Activated B cell treated with CpG ODN at 0.5 μM for 24 hours (primary cell): ENCODE measurements at regions of chr20 and their contacts with region 1.

Region 1: GRCh38 chr20:15654208-15654645 is 919.0 kb downstream of the KIF16B start:
- DNase-seq: no peak
- ATAC-seq: peak; percentile 100
- H3K4me3 Mint-ChIP-seq: no peak overlapping the region
- H3K27ac Mint-ChIP-seq: no peak overlapping the region
- H3K4me1 Mint-ChIP-seq: peaks cover 6% of the 10 kb centered on the region
- H3K27me3 Mint-ChIP-seq: no peaks in the 10 kb centered on the region
- CTCF ChIP-seq: no peak

Region 2: DNA sequence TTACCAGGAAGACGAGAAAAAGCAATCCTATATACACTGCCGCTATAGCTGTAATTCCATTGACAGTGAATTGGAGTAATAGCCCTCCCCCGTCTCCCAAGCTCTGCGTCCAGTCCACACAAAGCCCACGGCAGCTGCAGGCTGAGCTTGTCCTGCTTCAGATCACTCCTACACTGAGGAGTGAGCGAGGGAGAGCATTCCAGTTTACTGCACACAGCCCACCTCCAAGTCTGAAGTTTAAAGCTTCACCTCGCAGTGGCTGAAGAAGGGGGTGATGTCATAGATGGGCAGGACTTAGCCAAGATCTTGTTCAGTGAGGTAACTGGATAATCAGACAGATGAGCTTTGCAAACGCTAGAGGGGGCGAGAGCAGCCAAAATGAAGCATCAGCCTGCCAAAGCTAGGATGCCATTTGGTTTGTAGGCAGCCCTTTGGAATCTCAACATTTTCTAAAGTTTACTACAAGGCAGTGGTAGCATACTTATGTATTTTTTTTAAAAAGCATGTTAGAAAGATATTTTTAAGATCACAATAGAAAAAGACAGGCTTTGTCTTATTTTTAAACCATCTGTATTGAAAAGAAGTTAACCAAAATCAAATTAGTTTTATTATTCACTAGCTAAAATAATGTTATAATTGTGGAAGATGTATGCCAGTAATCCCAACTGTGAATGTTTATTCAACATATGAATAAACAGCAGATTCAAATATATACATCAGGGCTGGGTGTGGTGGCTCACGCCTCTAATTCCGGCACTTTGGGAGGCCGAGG is 1316.6 kb before region 1 on chr20 and contains the start of gene FLRT3:
- CTCF ChIA-PET with region 1: interaction called, 15 read pairs
- POLR2A ChIA-PET with region 1: interaction called, 4 read pairs
- intact Hi-C with region 1: loop called (anchors 1 kb)
- DNase-seq: peak; percentile 17
- ATAC-seq: peak; percentile 79
- H3K4me3 Mint-ChIP-seq: peak within 1 kb of the TSS; percentile 50
- H3K27ac Mint-ChIP-seq: no peak within 1 kb of the TSS
- H3K4me1 Mint-ChIP-seq: peaks cover 5% of the 10 kb centered on the region
- H3K27me3 Mint-ChIP-seq: peaks cover 12% of the 10 kb centered on the region
- CTCF ChIP-seq: no peak
- total RNA-seq, gene FLRT3: not detected in 2 replicates

Region 3: DNA sequence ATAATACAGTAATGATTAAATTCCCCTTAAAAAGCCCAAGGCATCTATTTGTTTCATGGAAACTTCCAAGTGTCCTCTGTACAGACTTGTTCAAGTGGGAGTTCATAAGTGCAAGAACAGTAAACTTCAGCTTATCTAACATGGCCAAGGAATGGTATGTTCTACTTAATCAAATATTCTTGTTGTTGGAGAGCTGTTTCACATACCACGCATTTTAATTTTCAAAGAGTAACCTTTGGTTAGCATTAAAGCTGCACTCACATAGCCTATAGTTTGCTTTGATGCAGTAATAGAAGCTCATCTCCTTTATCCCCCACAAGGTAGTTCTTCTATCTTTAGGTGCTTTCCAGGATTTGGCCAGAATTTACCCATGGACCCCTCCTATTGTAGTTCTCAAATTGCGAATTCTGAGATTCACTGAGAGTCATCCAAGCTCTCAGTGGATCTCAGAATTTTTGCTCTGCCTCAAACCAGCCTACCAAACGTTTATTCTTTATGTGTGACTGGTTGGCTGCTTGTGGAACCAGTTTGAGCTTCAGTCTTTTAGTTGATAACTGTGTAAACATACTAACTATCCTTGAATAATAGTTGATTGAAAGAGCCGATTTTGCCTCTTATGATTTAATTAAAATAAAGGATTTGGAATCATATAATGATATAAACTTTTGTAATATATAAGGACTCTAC is 648.8 kb before region 1 on chr20:
- CTCF ChIA-PET with region 1: no interaction called
- POLR2A ChIA-PET with region 1: no interaction called
- intact Hi-C with region 1: no loop called
- DNase-seq: no peak
- ATAC-seq: no peak
- H3K4me3 Mint-ChIP-seq: no peak overlapping the region
- H3K27ac Mint-ChIP-seq: no peak overlapping the region
- H3K4me1 Mint-ChIP-seq: no peaks in the 10 kb centered on the region
- H3K27me3 Mint-ChIP-seq: peaks cover 5% of the 10 kb centered on the region
- CTCF ChIP-seq: no peak

Region 4: DNA sequence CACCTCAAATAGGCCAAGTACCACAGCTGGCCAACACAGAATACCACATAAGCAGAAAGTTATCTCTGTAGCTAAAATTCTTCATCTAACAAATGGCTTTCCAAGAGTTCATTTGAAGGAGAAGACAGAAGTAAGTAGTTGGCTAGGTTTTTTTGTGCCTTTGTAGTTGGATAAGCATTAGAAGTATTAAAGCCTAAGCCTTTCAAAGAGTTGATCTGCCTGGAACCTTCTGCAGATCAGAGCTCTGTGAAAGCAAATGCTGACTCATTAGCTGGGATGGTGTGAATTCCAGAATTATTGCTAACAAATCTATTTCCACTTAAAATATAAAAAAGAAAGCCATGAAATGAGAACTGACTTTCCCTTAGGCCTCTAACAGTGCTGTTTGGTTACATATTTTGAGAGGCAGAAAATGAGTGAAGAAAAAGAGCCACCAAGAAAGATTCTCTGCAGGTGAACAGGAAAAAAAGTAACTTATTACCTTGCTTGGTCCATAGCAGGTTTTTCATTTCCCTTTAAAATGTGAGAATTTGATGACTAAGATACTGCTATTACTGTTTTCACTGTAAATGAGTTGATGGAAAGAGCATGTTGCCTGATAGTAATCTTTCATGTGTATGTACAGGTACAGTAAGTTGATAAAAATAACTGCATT is 553.6 kb before region 1 on chr20:
- CTCF ChIA-PET with region 1: no interaction called
- POLR2A ChIA-PET with region 1: no interaction called
- intact Hi-C with region 1: no loop called
- DNase-seq: no peak
- ATAC-seq: no peak
- H3K4me3 Mint-ChIP-seq: no peak overlapping the region
- H3K27ac Mint-ChIP-seq: no peak overlapping the region
- H3K4me1 Mint-ChIP-seq: no peaks in the 10 kb centered on the region
- H3K27me3 Mint-ChIP-seq: no peaks in the 10 kb centered on the region
- CTCF ChIP-seq: no peak

Region 5: GRCh38 chr20:15265581-15266309 is 388.5 kb before region 1 on chr20:
- CTCF ChIA-PET with region 1: interaction called, 3 read pairs
- POLR2A ChIA-PET with region 1: no interaction called
- intact Hi-C with region 1: loop called (anchors 1 kb)
- DNase-seq: no peak
- ATAC-seq: no peak
- H3K4me3 Mint-ChIP-seq: no peak overlapping the region
- H3K27ac Mint-ChIP-seq: no peak overlapping the region
- H3K4me1 Mint-ChIP-seq: peaks cover 29% of the 10 kb centered on the region
- H3K27me3 Mint-ChIP-seq: no peaks in the 10 kb centered on the region
- CTCF ChIP-seq: no peak

Region 6: GRCh38 chr20:15643714-15644113 is 10.5 kb before region 1 on chr20:
- CTCF ChIA-PET with region 1: interaction called, 12 read pairs
- POLR2A ChIA-PET with region 1: no interaction called
- intact Hi-C with region 1: no loop called
- DNase-seq: no peak
- ATAC-seq: no peak
- H3K4me3 Mint-ChIP-seq: no peak overlapping the region
- H3K27ac Mint-ChIP-seq: no peak overlapping the region
- H3K4me1 Mint-ChIP-seq: no peaks in the 10 kb centered on the region
- H3K27me3 Mint-ChIP-seq: no peaks in the 10 kb centered on the region
- CTCF ChIP-seq: no peak